ENCODE measurements at regions of chr17 and their contacts with region 1.

Region 1: DNA sequence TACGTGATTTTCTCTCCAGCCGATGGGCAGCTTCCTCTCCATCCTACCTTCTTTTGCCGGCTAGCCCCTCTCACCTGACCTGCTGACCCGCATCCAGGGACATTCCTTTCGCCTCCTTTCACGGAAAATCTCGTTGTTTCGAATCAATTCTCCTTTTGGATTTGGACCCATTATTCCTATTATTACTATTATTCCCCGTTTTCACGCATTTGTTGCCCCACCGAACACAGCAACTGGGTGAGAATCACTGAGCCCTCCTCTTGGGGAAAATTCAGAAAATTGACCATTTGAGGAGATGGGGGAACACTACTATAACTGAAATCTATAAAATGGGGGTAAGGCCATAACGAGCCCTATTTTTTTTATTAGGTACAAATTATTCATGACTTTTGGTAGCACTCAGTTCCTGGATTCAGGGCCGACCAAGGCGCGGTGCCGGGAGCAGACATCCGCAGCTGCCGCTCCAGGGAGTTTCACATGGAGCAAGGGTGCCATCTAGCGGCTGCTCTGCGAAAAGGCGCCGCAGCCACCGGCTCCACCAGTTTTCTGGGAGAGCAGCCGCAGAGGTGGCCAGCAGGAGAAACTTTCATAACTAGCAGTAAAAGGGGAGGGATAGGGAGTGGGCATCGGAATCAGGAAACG is 3.3 kb upstream of the HOXB8 start:
- DNase-seq: peak; percentile 95
- CTCF ChIP-seq: peak; percentile 92

Region 2: GRCh38 chr17:48522031-48522653 is 96.2 kb before region 1 on chr17:
- in situ Hi-C with region 1: no loop called
- DNase-seq: no peak
- CTCF ChIP-seq: no peak

Region 3: GRCh38 chr17:48671697-48672171 is 53.4 kb after region 1 on chr17:
- in situ Hi-C with region 1: no loop called
- DNase-seq: peak; percentile 69
- CTCF ChIP-seq: peak; percentile 80

Region 4: GRCh38 chr17:48724251-48725003 is 106.0 kb after region 1 on chr17:
- in situ Hi-C with region 1: loop called (anchors 10 kb)
- DNase-seq: peak; percentile 78
- CTCF ChIP-seq: peak; percentile 86

Region 5: DNA sequence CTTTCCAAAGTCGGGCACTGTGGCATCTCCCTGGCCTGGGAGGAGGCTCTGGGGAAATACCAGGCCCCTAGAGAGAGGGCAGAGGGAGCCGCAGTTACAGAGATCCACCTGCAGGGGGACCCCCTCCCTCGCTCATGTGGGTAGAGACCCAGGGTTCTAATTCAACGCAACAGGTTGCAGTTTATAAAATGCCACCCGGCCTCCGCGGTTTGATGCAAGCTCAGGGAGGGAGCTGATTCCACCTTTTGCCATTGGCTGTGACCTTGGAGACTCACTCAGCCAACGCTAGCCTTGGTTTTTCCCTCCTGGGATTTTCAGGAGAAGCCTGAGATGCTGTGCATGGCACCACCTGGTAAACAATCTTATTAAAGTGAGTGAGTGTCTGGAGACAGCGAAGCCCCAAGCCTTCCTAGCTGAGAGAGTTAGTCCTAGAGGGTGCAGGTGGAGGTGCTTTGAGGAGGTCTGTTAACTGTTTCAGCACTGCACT is 186.6 kb after region 1 on chr17:
- in situ Hi-C with region 1: no loop called
- DNase-seq: peak; percentile 77
- CTCF ChIP-seq: peak; percentile 93

Region 6: GRCh38 chr17:48850792-48851323 is 232.5 kb after region 1 on chr17:
- in situ Hi-C with region 1: no loop called
- DNase-seq: no peak
- CTCF ChIP-seq: no peak